IMR-90 (cell line): ENCODE measurements at regions of chr9 and their contacts with region 1.

Region 1: DNA sequence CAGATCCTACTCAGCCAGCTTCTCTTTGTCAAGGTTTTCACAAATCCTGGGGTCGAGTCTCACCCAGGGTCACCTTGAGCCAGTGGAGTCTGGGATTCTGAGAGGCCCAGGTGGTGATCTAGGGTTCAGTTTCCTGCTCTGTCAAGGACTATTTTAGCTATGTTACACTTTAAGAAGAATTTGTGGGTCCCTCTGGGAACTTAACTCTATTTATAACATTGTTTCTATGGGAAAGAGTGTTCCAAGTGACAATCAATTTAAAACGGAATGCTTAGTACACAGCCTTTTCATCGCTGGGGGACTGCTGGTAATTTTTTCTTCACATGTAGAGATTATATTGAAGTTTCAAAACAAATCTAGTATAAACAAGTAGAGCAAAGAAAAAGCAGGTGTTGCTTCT is 26.9 kb upstream of the TMEM252 start:
- DNase-seq: no peak
- ATAC-seq: no peak
- H3K4me3 ChIP-seq: no peak overlapping the region
- H3K27ac ChIP-seq: no peak overlapping the region
- H3K4me1 ChIP-seq: no peaks in the 10 kb centered on the region
- H3K27me3 ChIP-seq: no peaks in the 10 kb centered on the region
- CTCF ChIP-seq: no peak
- POLR2A ChIP-seq: no peak
- RAD21 ChIP-seq: no peak

Region 2: GRCh38 chr9:68515326-68515901 is 52.2 kb before region 1 on chr9:
- CTCF ChIA-PET with region 1: no interaction called
- POLR2A ChIA-PET with region 1: no interaction called
- dilution Hi-C with region 1: no loop called
- in situ Hi-C with region 1: no loop called
- intact Hi-C with region 1: loop called (anchors 5 kb)
- DNase-seq: peak; percentile 87
- ATAC-seq: peak; percentile 79
- H3K4me3 ChIP-seq: no peak overlapping the region
- H3K27ac ChIP-seq: no peak overlapping the region
- H3K4me1 ChIP-seq: peaks cover 2% of the 10 kb centered on the region
- H3K27me3 ChIP-seq: no peaks in the 10 kb centered on the region
- CTCF ChIP-seq: no peak
- POLR2A ChIP-seq: no peak
- RAD21 ChIP-seq: no peak